CD14-positive monocyte (primary cell): ENCODE measurements at regions of chr11 and their contacts with region 1.

Region 1: DNA sequence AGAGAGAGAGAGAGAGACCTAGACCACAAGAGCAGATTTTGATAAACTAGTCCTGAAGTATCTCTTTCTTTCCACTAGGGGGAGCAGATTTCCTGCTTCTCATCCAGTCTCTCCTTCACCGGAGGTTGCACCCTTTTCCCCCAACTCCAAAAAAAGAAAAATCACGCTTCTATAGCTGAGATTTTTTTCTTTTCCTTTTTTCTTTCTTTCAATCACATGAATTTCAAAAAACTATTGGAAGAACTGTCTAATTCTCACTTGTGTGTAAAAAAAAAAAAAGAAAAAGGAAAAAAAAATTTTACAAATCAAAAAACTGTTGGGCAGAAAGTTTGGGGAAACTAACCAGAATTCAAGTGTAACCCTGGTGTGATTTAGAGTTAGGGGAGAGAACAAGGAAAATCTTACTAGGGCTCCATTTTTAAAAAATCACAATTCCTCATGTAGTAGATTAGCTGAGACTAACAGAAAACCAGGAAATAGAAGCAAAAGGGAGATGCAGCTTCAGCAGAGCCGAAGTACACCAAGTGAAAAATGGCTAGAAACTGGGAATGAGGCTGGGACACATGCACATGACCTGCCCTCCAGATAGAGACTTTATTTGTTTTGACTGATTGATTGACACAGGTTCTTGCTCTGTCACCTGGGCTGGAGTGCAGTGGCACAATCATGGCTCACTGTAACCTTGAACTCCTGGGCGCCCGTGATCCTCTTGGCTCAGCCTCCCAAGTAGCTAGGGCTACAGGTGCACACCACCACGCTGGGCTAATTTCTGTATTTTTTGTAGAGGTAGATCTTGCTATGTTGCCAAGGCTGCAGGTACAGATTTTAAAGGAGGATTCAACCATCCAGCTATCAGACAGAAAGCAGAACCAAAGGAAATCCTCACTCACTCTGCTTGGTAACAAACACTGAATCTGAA is 27.1 kb downstream of the SDHD start:
- DNase-seq: peak; percentile 36 to 72 (median 72)
- H3K4me3 ChIP-seq: no peak overlapping the region
- H3K4me3 Mint-ChIP-seq: no peak overlapping the region
- H3K27ac ChIP-seq: no peak overlapping the region
- H3K27ac Mint-ChIP-seq: peak overlapping the region in 3 of 7 donors; percentile 21 to 77 (median 35)
- H3K4me1 ChIP-seq: peaks cover 10 to 15% of the 10 kb centered on the region in 2 donors
- H3K4me1 Mint-ChIP-seq: peaks cover 19% of the 10 kb centered on the region
- H3K27me3 ChIP-seq: no peaks in the 10 kb centered on the region
- H3K27me3 Mint-ChIP-seq: peaks cover 0 to 2% (median 0%) of the 10 kb centered on the region in 3 donors
- CTCF ChIP-seq: peak; percentile 80

Region 2: GRCh38 chr11:112174789-112175598 is 61.2 kb after region 1 on chr11 and contains the start of gene BCO2:
- intact Hi-C with region 1: loop called (anchors 5 kb)
- DNase-seq: peak; percentile 88 to 92 (median 91)
- H3K4me3 ChIP-seq: peak within 1 kb of the TSS in 2 of 3 experiments; percentile 3 to 49
- H3K4me3 Mint-ChIP-seq: peak within 1 kb of the TSS; percentile 67 to 85
- H3K27ac ChIP-seq: peak within 1 kb of the TSS; percentile 7 to 54
- H3K27ac Mint-ChIP-seq: peak within 1 kb of the TSS; percentile 82 to 90 (median 86)
- H3K4me1 ChIP-seq: peaks cover 30 to 31% of the 10 kb centered on the region in 2 donors
- H3K4me1 Mint-ChIP-seq: peaks cover 34% of the 10 kb centered on the region
- H3K27me3 ChIP-seq: no peaks in the 10 kb centered on the region
- H3K27me3 Mint-ChIP-seq: peaks cover 0 to 2% (median 1%) of the 10 kb centered on the region in 3 donors
- CTCF ChIP-seq: peak; percentile 100
- polyA plus RNA-seq, gene BCO2: 0.20 to 1.9 TPM in 2 of 3 donors, not detected in the other

Region 3: DNA sequence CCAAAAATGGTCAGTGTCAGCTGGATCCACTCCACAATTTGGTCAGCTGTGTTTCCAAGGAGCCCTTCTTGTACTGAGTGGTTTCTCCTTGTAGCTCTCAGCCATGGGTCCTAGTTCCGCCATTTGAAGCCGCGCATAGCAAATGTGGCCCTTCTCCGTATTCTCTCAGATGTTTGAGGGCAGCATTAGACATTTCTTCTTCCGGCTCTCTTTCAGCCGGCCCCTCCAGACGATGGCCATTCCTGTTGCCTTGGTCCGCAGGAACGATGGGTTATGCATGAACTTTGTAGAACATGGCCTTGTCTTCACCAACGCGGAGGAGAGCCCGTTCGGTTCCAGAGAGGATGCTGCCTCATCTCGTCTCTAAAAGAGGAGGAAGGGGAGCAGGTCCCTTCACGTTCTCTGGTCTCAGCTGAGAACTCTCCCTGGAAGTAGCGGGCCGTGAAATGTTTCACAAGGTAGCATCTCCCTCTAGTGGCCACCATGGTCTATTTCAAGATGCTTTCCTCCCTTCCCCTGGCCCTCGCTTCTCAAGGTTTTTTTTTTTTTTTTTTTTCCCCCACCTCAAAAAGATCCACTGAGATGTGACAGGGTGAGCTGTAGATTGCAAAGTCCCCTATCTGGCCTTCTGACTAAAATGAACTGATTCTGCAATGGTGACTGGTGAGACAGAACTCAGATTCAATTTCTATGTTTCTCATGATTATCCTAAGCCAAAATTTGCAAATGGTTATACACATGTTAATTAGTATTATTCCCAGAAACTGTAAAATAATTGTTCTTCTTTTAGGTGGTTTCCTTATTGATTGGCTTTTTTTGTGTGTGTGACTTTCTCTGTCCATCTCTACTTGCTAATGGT is 166.7 kb after region 1 on chr11:
- intact Hi-C with region 1: loop called in 1 of 2 experiments (anchors 10 kb)
- DNase-seq: peak; percentile 69 to 82 (median 76)
- H3K4me3 ChIP-seq: peak overlapping the region; percentile 44 to 85 (median 49)
- H3K4me3 Mint-ChIP-seq: peak overlapping the region; percentile 87 to 95
- H3K27ac ChIP-seq: peak overlapping the region in 1 of 2 donors; percentile 33
- H3K27ac Mint-ChIP-seq: peak overlapping the region in 4 of 7 donors; percentile 57 to 79 (median 70)
- H3K4me1 ChIP-seq: peaks cover 13 to 21% of the 10 kb centered on the region in 2 donors
- H3K4me1 Mint-ChIP-seq: peaks cover 33% of the 10 kb centered on the region
- H3K27me3 ChIP-seq: no peaks in the 10 kb centered on the region
- H3K27me3 Mint-ChIP-seq: peaks cover 0 to 4% (median 2%) of the 10 kb centered on the region in 3 donors
- CTCF ChIP-seq: peak; percentile 65